Naive thymus-derived CD8-positive, alpha-beta T cell (primary cell): ENCODE measurements at regions of chr19 and their contacts with region 1.

Region 1: GRCh38 chr19:36128392-36128736 is 11.5 kb upstream of the CAPNS1 start:
- DNase-seq: no peak
- ATAC-seq: peak in 1 of 2 donors; percentile 18
- H3K4me3 Mint-ChIP-seq: peak overlapping the region; percentile 83 to 93 (median 90)
- H3K27ac Mint-ChIP-seq: peak overlapping the region; percentile 60 to 95 (median 91)
- H3K4me1 Mint-ChIP-seq: peaks cover 2 to 41% (median 16%) of the 10 kb centered on the region in 4 donors
- H3K27me3 Mint-ChIP-seq: no peaks in the 10 kb centered on the region

Region 2: DNA sequence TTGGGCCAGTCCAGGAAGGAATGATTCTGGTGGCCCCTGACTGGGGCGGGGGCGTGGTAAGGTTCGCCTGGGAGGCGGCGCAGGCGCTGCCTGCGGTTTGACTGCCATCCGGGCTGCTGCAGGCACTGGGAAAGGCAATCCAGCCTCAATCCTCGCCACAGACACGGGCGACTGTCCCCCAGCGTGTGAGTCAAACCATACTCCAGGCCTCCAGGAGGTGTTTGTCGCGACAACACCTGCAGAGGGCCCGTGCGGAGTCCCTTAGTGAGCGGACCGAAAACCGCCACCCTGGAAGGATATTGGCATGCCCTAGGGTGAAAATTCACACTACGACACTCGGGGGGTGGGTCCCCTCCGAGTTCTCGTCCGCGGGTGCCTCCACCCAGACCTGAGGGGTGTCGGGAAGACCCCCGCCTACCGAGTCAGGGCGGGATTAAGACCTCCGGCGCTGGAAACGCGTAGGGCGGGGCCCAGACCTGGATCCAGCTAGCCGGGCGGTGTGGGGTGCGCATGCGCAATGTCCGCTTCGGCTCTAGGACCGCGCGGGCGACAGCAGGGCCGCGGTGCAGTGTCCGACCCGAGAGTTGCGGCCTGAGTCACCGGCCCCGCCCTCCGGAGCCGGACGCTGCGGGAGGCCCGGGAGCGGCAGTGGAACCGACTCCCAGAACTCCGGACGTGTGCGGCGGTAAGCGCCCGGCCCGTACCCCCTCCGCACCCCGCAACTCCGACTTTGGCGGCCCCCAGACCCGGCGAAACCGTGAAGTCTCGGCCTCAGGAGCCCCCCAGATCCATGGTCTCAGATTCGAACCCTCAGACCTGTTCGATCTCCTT is 11.3 kb after region 1 on chr19 and contains the start of gene CAPNS1:
- POLR2A ChIA-PET with region 1: interaction called, 23 read pairs
- DNase-seq: peak; percentile 86 to 95 (median 90)
- ATAC-seq: peak; percentile 67 to 70
- H3K4me3 Mint-ChIP-seq: peak within 1 kb of the TSS; percentile 92 to 96 (median 95)
- H3K27ac Mint-ChIP-seq: peak within 1 kb of the TSS; percentile 82 to 97 (median 95)
- H3K4me1 Mint-ChIP-seq: peaks cover 12 to 22% (median 19%) of the 10 kb centered on the region in 4 donors
- H3K27me3 Mint-ChIP-seq: no peaks in the 10 kb centered on the region
- polyA plus RNA-seq, gene CAPNS1: 93.4 to 137 (median 100.0) TPM

Region 3: GRCh38 chr19:36169084-36169760 is 40.9 kb after region 1 on chr19:
- POLR2A ChIA-PET with region 1: interaction called, 10 read pairs
- DNase-seq: no peak
- ATAC-seq: no peak
- H3K4me3 Mint-ChIP-seq: no peak overlapping the region
- H3K27ac Mint-ChIP-seq: peak overlapping the region in 1 of 10 donors; percentile 22
- H3K4me1 Mint-ChIP-seq: peaks cover 0 to 4% (median 2%) of the 10 kb centered on the region in 4 donors
- H3K27me3 Mint-ChIP-seq: no peaks in the 10 kb centered on the region